ENCODE measurements at regions of chr6 and their contacts with region 1.

Region 1: GRCh38 chr6:90296346-90297114 is at the start of gene BACH2:
- DNase-seq: peak; percentile 79 to 94 (median 88)
- H3K4me3 ChIP-seq: peak within 1 kb of the TSS; percentile 75
- H3K4me3 Mint-ChIP-seq: peak within 1 kb of the TSS; percentile 87 to 95 (median 91)
- H3K27ac ChIP-seq: peak within 1 kb of the TSS; percentile 68
- H3K27ac Mint-ChIP-seq: peak within 1 kb of the TSS; percentile 61 to 98 (median 92)
- H3K4me1 ChIP-seq: peaks cover 19% of the 10 kb centered on the region
- H3K4me1 Mint-ChIP-seq: peaks cover 20 to 42% (median 28%) of the 10 kb centered on the region in 3 donors
- H3K27me3 ChIP-seq: no peaks in the 10 kb centered on the region
- H3K27me3 Mint-ChIP-seq: peaks cover 5 to 9% of the 10 kb centered on the region in 2 donors
- total RNA-seq, gene BACH2: 39.9 to 41.8 TPM

Region 2: GRCh38 chr6:90274451-90275030 is 22.0 kb before region 1 on chr6:
- CTCF ChIA-PET with region 1: interaction called, 14 read pairs
- POLR2A ChIA-PET with region 1: interaction called, 7 read pairs
- DNase-seq: peak; percentile 77 to 97 (median 96)
- H3K4me3 ChIP-seq: peak overlapping the region; percentile 5
- H3K4me3 Mint-ChIP-seq: peak overlapping the region; percentile 53 to 81 (median 75)
- H3K27ac ChIP-seq: peak overlapping the region; percentile 21
- H3K27ac Mint-ChIP-seq: peak overlapping the region; percentile 93 to 100 (median 99)
- H3K4me1 ChIP-seq: peaks cover 81% of the 10 kb centered on the region
- H3K4me1 Mint-ChIP-seq: peaks cover 40 to 78% (median 75%) of the 10 kb centered on the region in 3 donors
- H3K27me3 ChIP-seq: no peaks in the 10 kb centered on the region
- H3K27me3 Mint-ChIP-seq: peaks cover 0 to 6% of the 10 kb centered on the region in 2 donors

Region 3: GRCh38 chr6:90285611-90286381 is 10.7 kb before region 1 on chr6:
- CTCF ChIA-PET with region 1: interaction called, 13 read pairs
- POLR2A ChIA-PET with region 1: interaction called, 30 read pairs
- DNase-seq: peak; percentile 21 to 80 (median 59)
- H3K4me3 ChIP-seq: peak overlapping the region; percentile 59
- H3K4me3 Mint-ChIP-seq: peak overlapping the region; percentile 78 to 91 (median 89)
- H3K27ac ChIP-seq: no peak overlapping the region
- H3K27ac Mint-ChIP-seq: peak overlapping the region; percentile 72 to 95 (median 86)
- H3K4me1 ChIP-seq: peaks cover 71% of the 10 kb centered on the region
- H3K4me1 Mint-ChIP-seq: peaks cover 54 to 86% (median 78%) of the 10 kb centered on the region in 3 donors
- H3K27me3 ChIP-seq: no peaks in the 10 kb centered on the region
- H3K27me3 Mint-ChIP-seq: peaks cover 0 to 1% of the 10 kb centered on the region in 2 donors